Cardiac septum (tissue), 1 donor: ENCODE measurements at regions of chr20 and their contacts with region 1.

Region 1: DNA sequence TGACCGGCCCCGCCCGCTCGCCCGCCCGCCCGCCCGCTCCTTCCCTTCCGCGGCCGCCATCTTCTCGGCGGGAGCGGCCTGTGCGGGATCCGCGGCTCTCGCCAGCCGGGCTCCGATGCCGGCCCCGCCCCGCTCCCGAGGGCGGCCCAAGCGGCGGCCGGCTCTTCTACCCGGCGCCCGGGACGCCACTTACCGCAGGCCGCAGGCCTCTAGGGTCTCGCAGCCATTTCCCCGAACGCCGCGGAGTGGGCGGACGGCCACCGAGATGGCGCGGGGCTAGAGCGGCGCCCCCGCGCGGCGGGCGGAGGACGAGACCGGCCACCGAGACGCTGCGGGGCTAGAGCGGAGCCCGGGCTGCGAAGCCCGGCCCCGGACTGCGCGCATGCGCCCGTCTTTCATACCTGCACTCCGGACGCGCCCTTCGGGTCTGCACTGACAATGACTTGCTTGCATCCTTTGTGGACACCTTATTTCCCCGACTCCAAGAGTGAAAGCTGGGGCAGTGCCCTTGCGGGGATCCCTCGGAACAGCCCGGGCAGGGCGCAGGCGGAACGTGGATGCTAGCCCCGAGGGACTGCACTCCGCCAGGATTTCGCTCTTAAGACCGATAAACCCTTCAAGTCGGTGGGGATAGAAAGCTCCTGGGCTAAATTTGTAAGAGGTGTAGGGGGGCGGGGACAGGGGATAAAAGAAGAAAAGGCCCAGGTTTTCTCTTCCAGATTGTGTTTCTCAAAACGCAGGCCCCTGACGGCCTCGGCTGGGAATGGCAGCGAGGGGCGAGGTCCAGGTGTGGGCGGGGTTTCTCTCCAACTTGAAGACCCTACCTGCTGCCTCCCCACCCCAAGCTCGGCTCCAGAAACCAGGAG is at the start of gene DIDO1:
- DNase-seq: peak; percentile 97
- total RNA-seq, gene DIDO1: 38.9 TPM

Region 2: GRCh38 chr20:62937366-62938104 is 11.1 kb after region 1 on chr20:
- intact Hi-C with region 1: loop called (anchors 1 kb)
- DNase-seq: peak; percentile 98

Region 3: DNA sequence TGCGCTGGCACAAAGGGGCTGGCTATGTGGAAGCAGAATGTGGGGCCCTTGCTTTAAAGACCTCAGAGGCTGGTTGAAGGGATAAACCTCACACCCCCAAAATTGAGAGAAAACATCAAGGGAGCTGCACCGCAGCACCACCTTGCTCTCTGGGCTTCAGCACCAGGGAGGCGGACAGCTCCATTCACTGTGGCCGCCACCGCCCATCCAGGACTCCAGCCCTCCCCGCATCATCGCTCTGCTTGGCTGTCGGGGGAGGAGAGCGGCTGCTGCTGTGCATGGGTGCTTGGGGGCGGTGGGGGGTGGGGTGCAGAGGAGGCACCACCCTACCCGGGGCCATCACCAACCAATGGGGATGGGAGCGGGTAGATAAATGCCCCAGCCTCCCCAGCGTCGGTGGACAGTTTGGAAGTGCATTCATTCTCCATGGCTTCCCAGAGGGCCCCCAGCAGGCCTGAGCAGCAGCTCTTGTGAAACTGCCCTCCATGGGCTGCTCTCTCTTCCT is 155.9 kb after region 1 on chr20:
- intact Hi-C with region 1: no loop called
- DNase-seq: no peak